Gastrocnemius medialis (tissue), 4 donors: ENCODE measurements at regions of chr12 and their contacts with region 1.

Region 1: GRCh38 chr12:33357158-33357557 is 82.5 kb downstream of the SYT10 start:
- DNase-seq: no peak
- ATAC-seq: no peak
- H3K4me3 ChIP-seq: no peak overlapping the region
- H3K27ac ChIP-seq: no peak overlapping the region
- H3K4me1 ChIP-seq: no peaks in the 10 kb centered on the region
- H3K27me3 ChIP-seq: no peaks in the 10 kb centered on the region
- CTCF ChIP-seq: no peak
- POLR2A ChIP-seq: no peak

Region 2: DNA sequence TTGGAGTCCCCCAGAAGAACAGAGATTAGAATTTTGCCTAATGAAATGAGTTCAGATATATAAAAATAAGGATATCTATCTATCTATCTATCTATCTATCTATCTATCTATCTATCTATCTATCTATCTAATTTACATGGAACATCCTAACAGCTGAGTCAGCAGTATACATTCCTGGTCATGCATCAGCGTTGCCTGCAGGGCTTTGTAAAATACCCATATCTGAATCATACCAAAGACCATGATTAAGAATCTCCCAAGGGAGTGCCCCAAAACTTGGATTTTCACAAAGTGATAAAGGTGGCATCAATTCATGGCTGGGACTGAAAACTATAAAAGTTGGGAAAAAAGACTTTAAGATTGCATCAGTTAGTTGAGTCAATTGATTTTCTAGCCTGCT is 115.1 kb after region 1 on chr12:
- in situ Hi-C with region 1: loop called in 1 of 4 experiments (anchors 25 kb)
- intact Hi-C with region 1: no loop called
- DNase-seq: no peak
- ATAC-seq: no peak
- H3K4me3 ChIP-seq: no peak overlapping the region
- H3K27ac ChIP-seq: no peak overlapping the region
- H3K4me1 ChIP-seq: no peaks in the 10 kb centered on the region
- H3K27me3 ChIP-seq: no peaks in the 10 kb centered on the region
- CTCF ChIP-seq: no peak
- POLR2A ChIP-seq: no peak